Astrocyte of the cerebellum (primary cell): ENCODE measurements at regions of chr18 and their contacts with region 1.

Region 1: DNA sequence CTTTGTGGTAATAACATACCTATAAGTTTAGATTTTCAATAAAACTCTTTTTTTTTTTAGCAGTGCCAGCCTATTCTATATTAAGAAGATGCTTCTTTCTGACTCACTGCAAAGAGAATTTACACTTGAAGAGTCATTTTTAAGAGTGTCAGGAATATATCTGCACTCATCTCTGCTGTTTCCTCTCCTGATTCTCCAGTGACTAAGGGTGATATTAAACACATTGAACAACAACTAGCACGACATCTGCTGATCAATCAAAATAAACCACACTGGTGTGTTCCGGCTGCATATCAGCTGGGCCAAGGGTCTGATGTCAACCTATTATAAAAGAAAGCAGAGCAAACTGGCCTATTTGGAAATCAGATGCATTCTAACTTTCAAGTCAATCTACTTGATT is 15.0 kb downstream of the RAB27B start:
- DNase-seq: no peak
- H3K4me3 ChIP-seq: no peak overlapping the region
- CTCF ChIP-seq: no peak

Region 2: GRCh38 chr18:54616220-54616848 is 227.0 kb before region 1 on chr18:
- in situ Hi-C with region 1: no loop called
- DNase-seq: no peak
- H3K4me3 ChIP-seq: no peak overlapping the region
- CTCF ChIP-seq: no peak

Region 3: DNA sequence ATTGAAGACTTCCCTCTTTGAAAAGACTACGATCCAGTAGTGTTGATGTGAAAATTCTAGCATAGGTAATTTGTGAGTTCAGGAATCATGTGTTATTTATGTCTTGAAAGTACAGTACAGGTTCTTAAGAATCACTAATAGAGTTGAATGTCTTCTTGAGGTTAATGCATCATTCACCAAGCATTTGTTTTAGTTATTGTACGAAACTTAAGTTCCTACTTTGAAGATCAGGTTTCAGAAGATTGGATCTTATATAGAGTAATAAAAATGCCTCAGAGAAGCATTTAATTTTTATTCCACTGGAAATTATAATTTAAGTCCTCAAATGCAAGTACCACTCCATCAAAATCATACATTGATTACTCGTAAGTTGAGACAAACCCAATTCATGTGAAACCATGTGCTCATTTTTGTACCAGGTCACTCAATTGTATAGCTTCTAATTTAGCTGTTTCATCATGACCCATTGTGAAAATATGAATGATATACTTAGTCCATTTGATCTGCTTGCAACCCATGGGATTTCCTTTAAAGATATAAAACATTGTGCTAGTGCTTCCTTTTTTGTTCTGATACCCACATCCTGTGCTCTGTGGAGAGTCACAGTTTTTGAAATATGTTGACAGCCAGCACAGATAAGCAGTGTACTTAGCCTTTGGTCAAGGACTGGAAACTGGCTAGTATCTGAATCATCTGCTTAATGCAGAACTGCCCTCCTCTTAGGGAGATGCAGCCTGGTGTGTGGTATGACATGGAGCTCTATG is 37.6 kb before region 1 on chr18:
- in situ Hi-C with region 1: loop called (anchors 5 kb)
- DNase-seq: no peak
- H3K4me3 ChIP-seq: no peak overlapping the region
- CTCF ChIP-seq: no peak

Region 4: DNA sequence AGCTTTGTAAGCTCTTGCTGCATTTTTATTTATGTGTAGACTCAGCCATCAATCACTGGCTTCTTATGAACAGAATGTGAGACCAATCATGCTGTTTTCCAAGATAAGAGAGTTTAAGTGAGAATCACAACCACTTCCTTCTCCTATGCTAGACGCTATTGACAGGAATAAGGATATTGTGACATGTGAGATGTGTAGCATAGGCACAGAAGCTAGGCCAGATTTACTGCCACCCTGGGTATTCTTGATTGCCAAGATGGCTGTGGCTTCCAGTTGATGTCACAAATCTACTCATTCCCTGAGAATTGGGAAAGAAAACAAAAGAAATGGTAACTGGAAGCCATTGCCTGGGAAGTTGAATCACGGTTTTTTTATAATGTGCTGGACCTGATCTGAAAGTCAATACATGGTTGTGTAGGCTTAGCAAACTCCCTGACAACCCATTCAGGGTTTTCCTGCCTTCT is 34.9 kb after region 1 on chr18:
- in situ Hi-C with region 1: no loop called
- DNase-seq: no peak
- H3K4me3 ChIP-seq: no peak overlapping the region
- CTCF ChIP-seq: no peak

Region 5: DNA sequence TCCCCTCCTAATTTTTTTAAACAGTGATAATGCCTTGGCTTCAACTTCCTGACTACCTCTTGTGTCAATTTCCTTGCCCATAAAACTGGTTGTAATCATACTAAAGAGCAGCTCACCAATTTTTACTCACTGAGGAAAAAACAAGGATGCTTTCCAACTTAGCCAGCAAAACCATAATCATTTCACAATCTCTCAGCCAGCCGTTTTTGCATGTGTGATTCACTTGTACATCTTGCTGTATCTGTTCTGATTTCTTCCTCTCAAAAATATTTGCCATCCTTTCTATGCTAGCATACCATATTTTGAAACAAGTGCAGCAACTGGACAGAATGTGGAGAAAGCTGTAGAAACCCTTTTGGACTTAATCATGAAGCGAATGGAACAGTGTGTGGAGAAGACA is 45.6 kb after region 1 on chr18:
- in situ Hi-C with region 1: loop called (anchors 5 kb)
- DNase-seq: no peak
- H3K4me3 ChIP-seq: no peak overlapping the region
- CTCF ChIP-seq: no peak